GM13976 (cell line): ENCODE measurements at regions of chr7 and their contacts with region 1.

Region 1: GRCh38 chr7:19117091-19117869 is at the start of gene TWIST1:
- DNase-seq: peak; percentile 60
- CTCF ChIP-seq: no peak

Region 2: DNA sequence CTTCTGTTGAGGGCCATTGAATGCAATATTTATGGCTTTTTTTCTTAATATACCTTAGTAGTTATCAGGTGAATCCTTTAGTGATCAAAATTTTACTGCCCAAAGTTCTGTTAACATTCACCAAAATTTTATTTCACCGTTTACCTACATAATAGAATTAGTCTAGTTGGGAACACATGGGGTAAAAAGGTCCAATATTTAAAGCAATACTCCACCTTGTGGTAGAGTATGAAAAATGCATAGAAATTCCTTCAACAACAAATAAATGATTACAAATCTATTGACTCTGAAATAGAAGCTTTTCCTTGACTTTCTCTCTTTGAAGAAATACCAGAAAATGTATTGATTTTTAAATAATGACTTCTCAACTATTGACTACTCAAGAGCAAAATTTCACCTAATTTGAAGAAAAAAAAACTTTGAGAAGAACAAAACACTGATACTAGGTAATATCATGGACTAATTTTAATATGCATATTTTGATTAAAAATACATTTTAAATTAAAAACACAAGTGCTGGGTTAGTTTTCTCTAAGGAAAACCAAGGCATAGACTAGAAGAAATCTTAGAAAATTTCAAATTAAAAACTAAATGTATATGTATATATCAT is 548.2 kb after region 1 on chr7:
- in situ Hi-C with region 1: loop called (anchors 25 kb)
- DNase-seq: peak; percentile 24
- CTCF ChIP-seq: peak; percentile 31

Region 3: DNA sequence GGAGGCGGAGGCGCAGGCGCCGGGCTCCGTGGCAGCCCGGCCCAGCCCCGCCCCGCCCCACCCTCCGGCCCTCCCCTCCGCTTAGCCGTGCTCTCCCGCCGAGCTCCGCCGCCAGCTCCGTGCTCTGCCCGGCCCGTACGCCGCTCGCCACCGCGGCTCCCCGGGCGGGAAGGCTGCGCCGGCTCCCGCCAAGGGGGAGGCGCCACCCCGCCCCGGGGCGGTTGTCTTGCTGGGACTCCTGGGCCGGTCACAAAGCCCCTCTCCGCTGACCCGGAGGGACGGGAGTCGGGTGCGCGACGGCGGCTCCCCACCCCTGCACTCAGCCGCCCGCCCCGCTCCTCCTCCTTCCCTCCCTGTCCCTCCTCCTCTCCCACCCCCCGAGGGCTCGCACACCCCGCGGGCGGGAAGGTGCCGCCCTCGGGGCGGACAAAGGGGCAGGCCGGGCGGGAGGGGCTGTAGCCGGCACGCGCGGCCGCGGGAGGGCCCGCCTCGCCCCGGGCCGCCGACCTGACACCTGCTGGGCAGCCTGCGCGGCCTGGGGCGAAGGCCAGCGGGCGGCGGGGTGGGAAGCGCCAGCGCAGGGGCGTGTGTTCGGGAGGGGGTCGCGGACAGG is 1680.9 kb after region 1 on chr7:
- in situ Hi-C with region 1: loop called (anchors 25 kb)
- DNase-seq: peak; percentile 89
- CTCF ChIP-seq: no peak